Right ventricle myocardium superior (tissue), 1 donor: ENCODE measurements at regions of chr3 and their contacts with region 1.

Region 1: DNA sequence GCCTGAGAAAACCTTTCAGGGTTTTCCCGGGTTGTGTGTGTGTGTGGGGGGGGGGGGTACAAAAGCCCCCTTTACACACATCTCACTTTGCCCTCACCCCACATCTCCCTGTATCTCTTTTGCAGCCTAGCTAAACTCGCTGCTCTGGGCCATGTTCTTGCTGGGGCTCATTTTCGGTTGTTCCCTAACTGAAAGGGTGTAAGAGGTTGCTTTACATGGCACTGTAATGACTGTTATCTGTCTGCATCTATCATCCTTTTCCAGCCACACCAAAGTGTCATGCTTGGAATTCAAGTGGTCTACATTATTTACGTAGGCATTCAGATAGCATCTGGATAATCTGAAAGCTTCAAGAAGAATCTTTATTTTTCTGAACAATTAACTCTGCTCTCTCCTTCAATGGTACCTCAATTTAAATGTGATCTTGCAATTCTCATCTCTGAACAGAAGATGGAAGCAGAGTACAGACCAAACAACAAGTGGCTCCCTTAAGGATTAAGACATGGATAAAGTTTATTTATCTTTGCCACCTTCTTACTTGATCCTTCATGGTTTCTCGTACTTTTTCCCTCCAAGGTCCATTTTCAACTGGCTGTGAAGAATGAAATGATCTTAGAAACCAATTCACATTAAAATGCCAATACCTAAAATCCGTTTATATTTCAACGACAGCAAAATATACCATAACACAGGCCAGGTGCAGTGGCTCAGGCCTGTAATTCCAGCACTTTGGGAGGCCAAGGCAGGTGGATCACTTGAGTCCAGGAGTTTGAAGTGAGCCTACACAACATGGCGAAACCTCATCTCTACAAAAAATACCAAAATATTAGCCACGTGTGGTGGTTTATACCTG is 34.9 kb downstream of the DCLK3 start:
- DNase-seq: no peak
- ATAC-seq: peak; percentile 79

Region 2: DNA sequence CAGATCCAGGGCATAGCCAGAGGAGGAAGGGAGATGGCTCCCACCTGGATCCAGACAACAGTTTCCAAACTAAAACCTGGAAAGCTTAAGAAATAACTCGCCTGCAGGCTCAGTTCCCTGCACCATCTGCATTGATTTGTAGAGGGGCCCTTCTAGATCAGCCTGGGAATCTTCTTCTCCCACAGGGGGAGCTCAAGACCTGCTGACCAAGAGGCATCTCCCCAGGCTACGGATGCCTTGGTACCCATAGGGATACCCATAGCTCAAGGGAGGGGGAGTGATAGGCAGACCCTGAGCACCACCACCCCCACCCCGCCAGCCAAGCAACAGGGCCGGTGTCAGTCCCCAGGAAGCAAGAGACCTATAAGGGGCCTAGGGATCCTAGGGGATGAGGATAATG is 62.9 kb after region 1 on chr3:
- intact Hi-C with region 1: no loop called
- DNase-seq: no peak
- ATAC-seq: no peak

Region 3: GRCh38 chr3:36871379-36872126 is 142.1 kb after region 1 on chr3:
- intact Hi-C with region 1: loop called (anchors 2 kb)
- DNase-seq: no peak
- ATAC-seq: no peak

Region 4: DNA sequence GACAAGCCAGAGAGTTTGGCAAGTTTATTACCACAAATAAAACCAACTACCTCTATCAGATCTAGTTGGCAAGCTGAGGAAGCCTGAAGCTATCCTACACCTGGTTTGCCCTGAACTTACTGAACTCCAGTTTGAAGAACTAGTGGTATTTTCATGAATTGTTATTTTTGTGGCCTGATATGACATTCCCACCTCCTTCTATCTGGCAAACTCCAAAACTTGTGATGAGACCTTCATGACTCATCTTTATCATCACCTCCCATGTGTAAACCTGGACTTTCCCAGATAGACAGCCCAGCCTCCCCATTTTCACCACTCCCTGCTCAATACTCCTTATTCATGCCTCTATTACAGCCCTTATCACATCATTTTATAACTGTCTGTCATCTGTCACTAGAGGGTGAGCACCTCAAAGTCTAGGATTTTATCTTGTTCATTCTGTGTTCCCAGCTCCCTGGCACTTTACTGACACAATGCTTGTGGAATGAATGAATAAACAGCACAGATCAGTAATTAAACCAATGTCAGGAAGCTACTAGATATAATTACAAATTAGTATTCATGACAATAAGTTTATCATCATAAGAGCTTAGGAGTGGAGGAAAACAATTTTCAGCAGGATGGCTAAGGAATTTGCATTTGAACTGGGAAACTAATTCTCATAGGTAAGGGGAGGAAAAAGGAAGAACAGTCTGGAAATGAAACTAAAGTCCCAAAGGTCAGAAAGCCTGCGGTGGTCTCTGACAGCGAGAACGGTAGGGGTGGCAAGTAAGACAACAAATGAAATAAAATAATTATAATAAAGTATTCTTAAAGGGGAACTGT is 228.6 kb after region 1 on chr3:
- intact Hi-C with region 1: loop called (anchors 5 kb)
- DNase-seq: no peak
- ATAC-seq: no peak